GM12878 (cell line): ENCODE measurements at regions of chr20 and their contacts with region 1.

Region 1: GRCh38 chr20:34834459-34834893 is 9.0 kb upstream of the NCOA6 start:
- DNase-seq: no peak
- ATAC-seq: peak; percentile 54
- H3K4me3 ChIP-seq: no peak overlapping the region
- H3K27ac ChIP-seq: no peak overlapping the region
- H3K4me1 ChIP-seq: no peaks in the 10 kb centered on the region
- H3K27me3 ChIP-seq: no peaks in the 10 kb centered on the region
- CTCF ChIP-seq: peak in 1 of 3 experiments; percentile 52; a peak in 2 of 6 replicates
- EP300 ChIP-seq: no peak
- POLR2A ChIP-seq: no peak
- RAD21 ChIP-seq: peak; percentile 46

Region 2: DNA sequence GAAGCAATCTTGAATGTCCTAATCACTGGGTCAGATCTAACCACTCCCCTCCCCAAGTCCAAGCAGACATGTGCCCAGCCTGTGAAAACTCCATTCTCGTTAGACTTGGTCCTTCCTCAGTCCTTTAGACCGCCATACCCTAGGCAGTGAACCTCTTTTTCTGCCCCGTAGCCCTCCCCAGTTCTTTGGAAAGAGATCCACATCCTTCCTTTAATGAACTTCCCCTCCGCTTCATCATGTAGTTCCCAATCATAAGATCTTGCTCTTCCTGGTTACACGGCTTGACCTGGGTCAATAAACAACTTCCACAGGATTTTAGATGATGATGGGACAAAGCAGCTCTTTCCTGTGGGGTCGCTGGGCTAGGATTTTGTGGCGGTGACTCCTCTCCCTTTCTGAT is 540.9 kb before region 1 on chr20:
- CTCF ChIA-PET with region 1: no interaction called
- POLR2A ChIA-PET with region 1: no interaction called
- RAD21 ChIA-PET with region 1: no interaction called
- SMC1A ChIA-PET with region 1: no interaction called
- in situ Hi-C with region 1: no loop called
- intact Hi-C with region 1: no loop called
- DNase-seq: no peak
- ATAC-seq: no peak
- H3K4me3 ChIP-seq: no peak overlapping the region
- H3K27ac ChIP-seq: no peak overlapping the region
- H3K4me1 ChIP-seq: no peaks in the 10 kb centered on the region; the same call in 1 of the 2 replicates
- H3K27me3 ChIP-seq: no peaks in the 10 kb centered on the region
- CTCF ChIP-seq: no peak
- EP300 ChIP-seq: no peak
- POLR2A ChIP-seq: no peak
- RAD21 ChIP-seq: no peak

Region 3: DNA sequence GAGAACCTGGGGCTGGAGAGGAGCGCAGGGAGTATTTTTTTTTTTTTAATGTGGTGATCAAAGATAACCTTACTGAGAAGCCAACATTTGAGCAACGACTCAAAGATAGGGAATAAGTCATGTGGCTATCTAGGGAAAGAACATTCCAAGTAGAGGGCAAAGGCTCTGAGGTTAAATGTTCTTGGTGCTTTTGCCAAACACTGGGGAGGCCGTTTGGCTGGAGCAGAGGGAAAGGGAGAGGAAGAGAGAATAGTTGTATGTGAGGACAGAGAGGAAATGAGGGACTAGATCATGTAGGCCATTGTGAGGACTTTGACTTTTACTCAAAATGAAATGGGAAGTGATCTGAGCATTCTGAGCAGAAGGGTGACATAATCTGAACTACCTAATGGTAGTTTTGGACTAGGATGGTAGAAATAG is 69.7 kb after region 1 on chr20:
- CTCF ChIA-PET with region 1: no interaction called
- POLR2A ChIA-PET with region 1: no interaction called
- RAD21 ChIA-PET with region 1: no interaction called
- SMC1A ChIA-PET with region 1: no interaction called
- in situ Hi-C with region 1: no loop called
- intact Hi-C with region 1: no loop called
- DNase-seq: no peak
- ATAC-seq: peak; percentile 80
- H3K4me3 ChIP-seq: no peak overlapping the region
- H3K27ac ChIP-seq: no peak overlapping the region
- H3K4me1 ChIP-seq: no peaks in the 10 kb centered on the region
- H3K27me3 ChIP-seq: no peaks in the 10 kb centered on the region
- CTCF ChIP-seq: no peak
- EP300 ChIP-seq: no peak
- POLR2A ChIP-seq: no peak
- RAD21 ChIP-seq: no peak

Region 4: GRCh38 chr20:34955232-34956040 is 121.0 kb after region 1 on chr20 and contains the starts of genes GSS and MYH7B:
- CTCF ChIA-PET with region 1: interaction called, 3 read pairs
- POLR2A ChIA-PET with region 1: no interaction called
- RAD21 ChIA-PET with region 1: no interaction called
- SMC1A ChIA-PET with region 1: no interaction called
- in situ Hi-C with region 1: loop called (anchors 5 kb)
- intact Hi-C with region 1: loop called (anchors 2 kb)
- DNase-seq: peak; percentile 72
- ATAC-seq: peak; percentile 95
- H3K4me3 ChIP-seq: peak within 1 kb of the TSS; percentile 86
- H3K27ac ChIP-seq: peak within 1 kb of the TSS; percentile 74
- H3K4me1 ChIP-seq: peaks cover 8% of the 10 kb centered on the region
- H3K27me3 ChIP-seq: no peaks in the 10 kb centered on the region
- CTCF ChIP-seq: peak; percentile 18 to 44 (median 42); a peak in 5 of 6 replicates
- EP300 ChIP-seq: no peak
- POLR2A ChIP-seq: peak; percentile 97
- RAD21 ChIP-seq: peak; percentile 62
- polyA plus RNA-seq, gene GSS: 12.7 to 39.5 TPM
- polyA plus RNA-seq, gene MYH7B: not detected

Region 5: DNA sequence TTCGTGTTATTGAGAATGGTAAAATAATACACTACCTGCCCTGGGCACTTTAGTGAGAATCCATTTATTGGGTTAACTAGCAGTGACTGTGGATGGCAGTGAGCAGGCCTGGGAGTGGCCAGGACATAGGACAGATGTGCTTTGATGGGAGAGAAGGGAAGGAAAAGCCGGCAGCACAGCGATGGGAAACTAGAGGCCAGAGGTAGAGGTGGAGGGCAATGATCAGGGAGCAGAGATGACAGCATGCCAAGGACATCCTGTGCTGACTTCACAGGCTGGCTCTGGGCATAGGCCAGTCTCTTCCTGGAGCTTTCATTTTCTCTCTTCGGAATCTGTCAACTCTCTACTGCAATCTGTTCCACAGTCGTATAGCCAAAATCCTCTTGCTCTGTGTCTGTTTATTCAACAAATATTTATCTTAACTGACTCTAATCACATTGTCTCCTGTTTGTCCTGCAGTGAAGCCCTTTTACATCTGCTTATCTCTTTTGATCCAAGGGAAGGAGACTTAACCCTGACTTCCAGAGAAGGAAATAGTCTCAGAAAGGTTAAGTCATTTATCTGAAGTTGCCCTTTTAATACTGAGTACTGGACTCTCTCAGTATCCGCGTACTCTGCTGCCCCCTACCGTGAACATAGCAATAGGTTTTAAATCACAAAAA is 373.6 kb after region 1 on chr20:
- CTCF ChIA-PET with region 1: interaction called, 3 read pairs
- POLR2A ChIA-PET with region 1: no interaction called
- RAD21 ChIA-PET with region 1: no interaction called
- SMC1A ChIA-PET with region 1: no interaction called
- in situ Hi-C with region 1: no loop called
- intact Hi-C with region 1: loop called (anchors 5 kb)
- DNase-seq: peak; percentile 20
- ATAC-seq: peak; percentile 97
- H3K4me3 ChIP-seq: no peak overlapping the region
- H3K27ac ChIP-seq: no peak overlapping the region
- H3K4me1 ChIP-seq: no peaks in the 10 kb centered on the region
- H3K27me3 ChIP-seq: no peaks in the 10 kb centered on the region
- CTCF ChIP-seq: peak; percentile 66 to 89 (median 71)
- EP300 ChIP-seq: no peak
- POLR2A ChIP-seq: no peak
- RAD21 ChIP-seq: peak; percentile 94

Region 6: DNA sequence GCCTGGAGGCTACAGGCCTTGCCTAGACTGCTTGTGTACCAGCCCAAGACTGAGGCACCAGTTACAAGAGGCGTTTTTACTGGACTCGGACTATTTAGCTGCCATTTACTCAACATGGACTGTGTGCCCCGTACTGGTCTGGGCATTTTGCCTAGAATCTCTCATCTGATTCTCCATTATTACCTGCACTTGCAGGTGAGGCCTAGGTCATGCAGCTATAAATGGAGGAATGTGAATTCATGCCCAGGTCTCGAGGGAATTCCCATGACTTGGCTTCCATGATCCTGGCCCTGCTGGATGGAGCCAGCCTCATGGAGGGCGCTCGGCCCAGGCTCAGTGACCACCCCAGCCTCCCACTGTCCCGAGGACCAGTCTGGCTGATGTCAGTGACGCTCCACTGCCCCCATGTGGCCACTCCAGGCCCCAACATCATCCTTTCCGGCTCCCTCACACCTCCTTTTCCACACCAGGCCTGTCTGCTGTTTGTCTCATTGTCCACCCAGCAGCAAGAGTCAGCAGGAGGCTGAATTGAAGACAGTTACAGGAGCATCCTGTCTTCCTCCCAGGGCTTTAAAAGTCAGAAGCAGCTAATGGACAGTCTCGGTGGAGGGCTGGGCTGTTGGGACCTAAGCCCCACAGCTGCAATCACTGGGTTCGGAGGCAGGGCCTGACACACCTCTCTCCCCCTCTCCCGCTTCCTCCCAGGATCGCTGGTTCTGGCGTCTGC is 434.7 kb after region 1 on chr20:
- CTCF ChIA-PET with region 1: no interaction called
- POLR2A ChIA-PET with region 1: no interaction called
- RAD21 ChIA-PET with region 1: no interaction called
- SMC1A ChIA-PET with region 1: interaction called, 3 read pairs
- in situ Hi-C with region 1: loop called (anchors 25 kb)
- intact Hi-C with region 1: loop called (anchors 1 kb)
- DNase-seq: no peak
- ATAC-seq: peak; percentile 96
- H3K4me3 ChIP-seq: no peak overlapping the region
- H3K27ac ChIP-seq: no peak overlapping the region
- H3K4me1 ChIP-seq: no peaks in the 10 kb centered on the region
- H3K27me3 ChIP-seq: no peaks in the 10 kb centered on the region
- CTCF ChIP-seq: peak; percentile 78 to 83 (median 82)
- EP300 ChIP-seq: no peak
- POLR2A ChIP-seq: no peak
- RAD21 ChIP-seq: peak; percentile 76